ENCODE measurements at regions of chr7 and their contacts with region 1.

Region 1: GRCh38 chr7:108016841-108017775 is 14.1 kb upstream of the LAMB1 start:
- DNase-seq: peak in 1 of 2 experiments; percentile 38
- H3K4me3 ChIP-seq: no peak overlapping the region
- H3K4me3 Mint-ChIP-seq: no peak overlapping the region
- H3K27ac Mint-ChIP-seq: peak overlapping the region; percentile 6
- H3K4me1 ChIP-seq: peaks cover 57% of the 10 kb centered on the region
- H3K4me1 Mint-ChIP-seq: peaks cover 29% of the 10 kb centered on the region
- H3K27me3 ChIP-seq: no peaks in the 10 kb centered on the region
- H3K27me3 Mint-ChIP-seq: no peaks in the 10 kb centered on the region
- CTCF ChIP-seq: peak; percentile 54 to 55

Region 2: DNA sequence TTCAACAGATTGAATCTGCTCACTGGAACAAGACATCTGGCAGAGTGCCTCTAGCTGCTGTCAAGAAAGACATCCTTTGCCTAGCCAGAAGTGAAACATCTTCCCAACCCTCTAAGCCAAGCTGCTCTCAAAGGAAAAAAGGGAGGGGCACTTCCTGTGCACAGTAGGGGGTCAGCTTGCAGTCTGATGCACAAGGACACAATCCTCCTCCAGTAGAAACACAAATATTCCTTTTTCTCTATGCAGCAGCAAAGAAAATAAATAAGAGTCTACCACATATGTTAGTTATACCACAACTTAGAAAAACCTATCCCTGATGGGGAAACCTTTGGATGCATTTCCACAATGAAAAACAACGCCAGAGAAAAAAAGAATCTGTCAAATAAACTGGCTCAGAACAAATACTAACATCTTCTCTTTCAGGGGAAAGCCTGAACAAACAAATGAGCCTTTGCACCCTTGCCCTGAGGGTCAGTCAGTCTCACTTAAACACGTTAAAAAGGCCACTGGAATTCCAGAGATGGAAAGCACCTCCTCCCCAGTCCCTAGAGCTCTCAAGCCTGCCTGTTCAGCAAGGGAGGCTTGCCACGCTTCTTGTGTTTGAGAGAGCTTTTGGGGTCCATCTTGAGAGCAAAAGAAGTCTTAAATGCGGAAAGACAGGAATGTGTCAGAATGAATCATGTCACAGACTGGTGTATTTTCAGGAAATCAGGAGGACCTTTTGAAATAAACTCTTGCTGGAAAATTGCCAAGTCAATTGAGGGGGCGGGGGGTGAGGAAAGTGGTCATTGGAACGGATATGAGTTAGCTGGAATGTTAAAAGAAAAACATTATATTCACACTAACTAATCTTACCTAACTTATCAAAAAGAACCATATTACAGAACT is 21.7 kb before region 1 on chr7:
- CTCF ChIA-PET with region 1: interaction called, 4 read pairs
- POLR2A ChIA-PET with region 1: no interaction called
- intact Hi-C with region 1: loop called (anchors 1 kb)
- DNase-seq: peak; percentile 80 to 82
- H3K4me3 ChIP-seq: no peak overlapping the region
- H3K4me3 Mint-ChIP-seq: peak overlapping the region; percentile 69
- H3K27ac Mint-ChIP-seq: peak overlapping the region; percentile 86
- H3K4me1 ChIP-seq: peaks cover 62% of the 10 kb centered on the region
- H3K4me1 Mint-ChIP-seq: peaks cover 27% of the 10 kb centered on the region
- H3K27me3 ChIP-seq: no peaks in the 10 kb centered on the region
- H3K27me3 Mint-ChIP-seq: no peaks in the 10 kb centered on the region
- CTCF ChIP-seq: no peak

Region 3: DNA sequence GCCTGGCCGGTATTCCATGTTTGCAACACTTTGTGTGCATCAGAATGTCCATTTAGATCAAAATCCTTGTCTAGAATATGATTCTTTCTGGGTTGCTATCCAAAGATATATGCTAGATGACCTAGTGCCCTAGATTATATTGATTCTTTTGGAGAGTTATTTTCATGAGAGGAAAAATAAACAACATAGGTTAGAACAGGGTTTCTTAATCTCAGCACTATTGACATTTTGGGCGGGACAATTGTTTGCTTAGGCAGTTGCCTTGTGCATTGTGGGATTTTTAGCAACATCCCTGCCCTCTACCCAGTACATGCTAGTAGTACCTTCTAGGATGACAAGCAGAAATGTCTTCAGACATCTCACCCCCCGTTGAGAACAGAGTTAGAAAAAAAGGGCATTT is 11.0 kb after region 1 on chr7:
- CTCF ChIA-PET with region 1: interaction called, 6 read pairs
- POLR2A ChIA-PET with region 1: interaction called, 3 read pairs
- intact Hi-C with region 1: loop called (anchors 1 kb)
- DNase-seq: peak; percentile 44 to 54
- H3K4me3 ChIP-seq: no peak overlapping the region
- H3K4me3 Mint-ChIP-seq: no peak overlapping the region
- H3K27ac Mint-ChIP-seq: no peak overlapping the region
- H3K4me1 ChIP-seq: peaks cover 36% of the 10 kb centered on the region
- H3K4me1 Mint-ChIP-seq: peaks cover 33% of the 10 kb centered on the region
- H3K27me3 ChIP-seq: no peaks in the 10 kb centered on the region
- H3K27me3 Mint-ChIP-seq: no peaks in the 10 kb centered on the region
- CTCF ChIP-seq: no peak

Region 4: DNA sequence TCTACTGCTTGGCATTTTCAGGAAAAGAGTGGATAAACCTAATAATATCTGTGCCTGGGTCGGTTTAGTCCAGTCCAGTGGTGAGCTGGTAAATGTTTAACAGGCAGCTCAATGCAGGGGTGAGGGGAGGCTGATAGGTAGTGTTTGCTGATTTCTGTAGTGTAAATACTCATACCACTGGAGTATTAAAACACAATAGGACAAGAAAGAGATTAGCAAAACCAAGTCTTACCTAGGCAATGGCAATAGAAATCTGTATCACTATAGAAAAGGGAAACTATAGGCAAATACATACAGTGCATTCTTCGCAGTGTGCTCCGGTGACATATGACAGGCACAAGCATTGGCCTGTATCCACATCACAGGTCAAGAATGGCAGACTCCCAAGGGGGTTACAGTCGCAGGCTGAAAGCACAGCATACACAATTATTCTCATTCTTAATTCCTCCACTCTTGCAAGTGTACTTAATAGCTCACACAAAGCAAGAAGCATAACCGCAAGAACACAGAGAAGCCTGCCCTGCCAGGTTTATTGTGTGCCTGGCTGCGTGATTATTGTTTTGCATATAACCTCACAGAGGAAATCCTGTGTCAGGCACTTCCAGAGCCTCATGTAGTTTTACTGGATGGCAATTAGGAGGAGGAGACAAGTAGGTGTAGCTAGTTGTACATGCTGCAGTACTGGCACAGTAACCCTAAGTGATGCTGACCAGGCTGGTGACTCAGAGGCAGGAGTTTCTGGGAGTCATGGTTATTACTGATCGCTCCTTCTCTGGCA is 78.0 kb after region 1 on chr7:
- CTCF ChIA-PET with region 1: interaction called, 11 read pairs
- POLR2A ChIA-PET with region 1: no interaction called
- intact Hi-C with region 1: loop called (anchors 5 kb)
- DNase-seq: peak; percentile 86 to 89
- H3K4me3 ChIP-seq: no peak overlapping the region
- H3K4me3 Mint-ChIP-seq: peak overlapping the region; percentile 62
- H3K27ac Mint-ChIP-seq: peak overlapping the region; percentile 63
- H3K4me1 ChIP-seq: peaks cover 76% of the 10 kb centered on the region
- H3K4me1 Mint-ChIP-seq: peaks cover 54% of the 10 kb centered on the region
- H3K27me3 ChIP-seq: no peaks in the 10 kb centered on the region
- H3K27me3 Mint-ChIP-seq: no peaks in the 10 kb centered on the region
- CTCF ChIP-seq: no peak

Measured in Caco-2 (cell line).